B cell (primary cell): ENCODE measurements at regions of chr4 and their contacts with region 1.

Region 1: GRCh38 chr4:3047464-3048286 is 26.7 kb downstream of the HTT-AS start:
- DNase-seq: peak; percentile 95
- ATAC-seq: peak; percentile 92
- H3K4me3 ChIP-seq: peak overlapping the region in 2 of 5 experiments; percentile 6 to 30
- H3K4me3 Mint-ChIP-seq: peak overlapping the region; percentile 71
- H3K27ac ChIP-seq: peak overlapping the region; percentile 92 to 97
- H3K27ac Mint-ChIP-seq: peak overlapping the region; percentile 91
- H3K4me1 ChIP-seq: peaks cover 42 to 61% of the 10 kb centered on the region in 2 donors
- H3K4me1 Mint-ChIP-seq: peaks cover 44% of the 10 kb centered on the region
- H3K27me3 ChIP-seq: no peaks in the 10 kb centered on the region
- H3K27me3 Mint-ChIP-seq: no peaks in the 10 kb centered on the region
- CTCF ChIP-seq: peak; percentile 78

Region 2: GRCh38 chr4:2696423-2696822 is 351.3 kb before region 1 on chr4:
- CTCF ChIA-PET with region 1: interaction called, 3 read pairs
- POLR2A ChIA-PET with region 1: interaction called, 5 read pairs
- intact Hi-C with region 1: loop called (anchors 2 kb)
- DNase-seq: peak; percentile 93
- ATAC-seq: peak; percentile 96
- H3K4me3 ChIP-seq: peak overlapping the region; percentile 17 to 69 (median 35)
- H3K4me3 Mint-ChIP-seq: peak overlapping the region; percentile 78
- H3K27ac ChIP-seq: peak overlapping the region; percentile 85 to 87
- H3K27ac Mint-ChIP-seq: peak overlapping the region; percentile 93
- H3K4me1 ChIP-seq: peaks cover 47 to 55% of the 10 kb centered on the region in 2 donors
- H3K4me1 Mint-ChIP-seq: peaks cover 55% of the 10 kb centered on the region
- H3K27me3 ChIP-seq: no peaks in the 10 kb centered on the region
- H3K27me3 Mint-ChIP-seq: no peaks in the 10 kb centered on the region
- CTCF ChIP-seq: no peak

Region 3: GRCh38 chr4:2843263-2843940 is 204.3 kb before region 1 on chr4 and contains the start of gene ADD1:
- CTCF ChIA-PET with region 1: no interaction called
- POLR2A ChIA-PET with region 1: no interaction called
- intact Hi-C with region 1: loop called (anchors 10 kb)
- DNase-seq: peak; percentile 99
- ATAC-seq: peak; percentile 91
- H3K4me3 ChIP-seq: peak within 1 kb of the TSS; percentile 82 to 97 (median 84)
- H3K4me3 Mint-ChIP-seq: peak within 1 kb of the TSS; percentile 92
- H3K27ac ChIP-seq: peak within 1 kb of the TSS; percentile 69 to 79
- H3K27ac Mint-ChIP-seq: peak within 1 kb of the TSS; percentile 97
- H3K4me1 ChIP-seq: peaks cover 48 to 55% of the 10 kb centered on the region in 2 donors
- H3K4me1 Mint-ChIP-seq: peaks cover 60% of the 10 kb centered on the region
- H3K27me3 ChIP-seq: no peaks in the 10 kb centered on the region
- H3K27me3 Mint-ChIP-seq: no peaks in the 10 kb centered on the region
- CTCF ChIP-seq: no peak
- total RNA-seq, gene ADD1: 383 and 417 TPM in 2 replicates

Region 4: GRCh38 chr4:3074078-3074795 is 26.6 kb after region 1 on chr4 and contains the starts of genes HTT and HTT-AS:
- CTCF ChIA-PET with region 1: interaction called, 4 read pairs
- POLR2A ChIA-PET with region 1: interaction called, 5 read pairs
- intact Hi-C with region 1: loop called (anchors 1 kb)
- DNase-seq: peak; percentile 99
- ATAC-seq: peak; percentile 77
- H3K4me3 ChIP-seq: peak within 1 kb of the TSS; percentile 59 to 96 (median 76)
- H3K4me3 Mint-ChIP-seq: peak within 1 kb of the TSS; percentile 95
- H3K27ac ChIP-seq: peak within 1 kb of the TSS; percentile 72 to 83
- H3K27ac Mint-ChIP-seq: peak within 1 kb of the TSS; percentile 96
- H3K4me1 ChIP-seq: peaks cover 38 to 51% of the 10 kb centered on the region in 2 donors
- H3K4me1 Mint-ChIP-seq: peaks cover 33% of the 10 kb centered on the region
- H3K27me3 ChIP-seq: no peaks in the 10 kb centered on the region
- H3K27me3 Mint-ChIP-seq: no peaks in the 10 kb centered on the region
- CTCF ChIP-seq: no peak
- total RNA-seq, gene HTT: 182 and 195 TPM in 2 replicates
- total RNA-seq, gene HTT-AS: 0.84 TPM in 1 of 2 replicates, not detected in the other

Region 5: GRCh38 chr4:3136453-3136852 is 88.8 kb after region 1 on chr4:
- CTCF ChIA-PET with region 1: no interaction called
- POLR2A ChIA-PET with region 1: no interaction called
- intact Hi-C with region 1: loop called (anchors 2 kb)
- DNase-seq: no peak
- ATAC-seq: no peak
- H3K4me3 ChIP-seq: no peak overlapping the region
- H3K4me3 Mint-ChIP-seq: no peak overlapping the region
- H3K27ac ChIP-seq: no peak overlapping the region
- H3K27ac Mint-ChIP-seq: no peak overlapping the region
- H3K4me1 ChIP-seq: no peaks in the 10 kb centered on the region
- H3K4me1 Mint-ChIP-seq: no peaks in the 10 kb centered on the region
- H3K27me3 ChIP-seq: no peaks in the 10 kb centered on the region
- H3K27me3 Mint-ChIP-seq: no peaks in the 10 kb centered on the region
- CTCF ChIP-seq: peak; percentile 66

Region 6: GRCh38 chr4:3176367-3177229 is 128.9 kb after region 1 on chr4:
- CTCF ChIA-PET with region 1: no interaction called
- POLR2A ChIA-PET with region 1: no interaction called
- intact Hi-C with region 1: no loop called
- DNase-seq: no peak
- ATAC-seq: no peak
- H3K4me3 ChIP-seq: no peak overlapping the region
- H3K4me3 Mint-ChIP-seq: no peak overlapping the region
- H3K27ac ChIP-seq: no peak overlapping the region
- H3K27ac Mint-ChIP-seq: no peak overlapping the region
- H3K4me1 ChIP-seq: no peaks in the 10 kb centered on the region
- H3K4me1 Mint-ChIP-seq: peaks cover 2% of the 10 kb centered on the region
- H3K27me3 ChIP-seq: no peaks in the 10 kb centered on the region
- H3K27me3 Mint-ChIP-seq: no peaks in the 10 kb centered on the region
- CTCF ChIP-seq: no peak